PC-9 (cell line): ENCODE measurements at regions of chr1 and their contacts with region 1.

Region 1: DNA sequence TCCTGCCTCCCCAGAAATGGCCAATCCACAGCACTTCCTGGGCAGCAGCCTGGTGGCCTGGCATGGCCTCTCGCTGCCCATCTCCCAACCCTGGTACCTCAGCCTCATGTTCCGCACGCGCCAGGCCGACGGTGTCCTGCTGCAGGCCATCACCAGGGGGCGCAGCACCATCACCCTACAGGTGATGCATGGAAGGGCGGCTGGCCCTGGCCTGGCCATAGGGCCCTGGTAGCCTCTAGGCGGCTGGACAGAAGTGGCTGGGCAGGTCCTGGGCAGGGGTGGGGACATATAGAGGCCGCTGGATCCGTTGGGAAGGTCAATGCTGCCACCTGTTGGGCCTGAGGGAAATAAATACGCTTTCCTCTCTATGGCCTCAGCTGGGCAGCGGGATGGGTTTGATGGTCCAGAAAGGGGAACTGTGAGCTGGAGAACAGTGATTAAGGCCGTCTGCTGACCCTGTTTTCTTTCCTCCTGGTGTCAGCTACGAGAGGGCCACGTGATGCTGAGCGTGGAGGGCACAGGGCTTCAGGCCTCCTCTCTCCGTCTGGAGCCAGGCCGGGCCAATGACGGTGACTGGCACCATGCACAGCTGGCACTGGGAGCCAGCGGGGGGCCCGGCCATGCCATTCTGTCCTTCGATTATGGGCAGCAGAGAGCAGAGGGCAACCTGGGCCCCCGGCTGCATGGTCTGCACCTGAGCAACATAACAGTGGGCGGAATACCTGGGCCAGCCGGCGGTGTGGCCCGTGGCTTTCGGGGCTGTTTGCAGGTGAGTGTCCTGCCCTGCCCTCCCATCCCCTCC is 14.5 kb downstream of the CELSR2 start:
- DNase-seq: peak; percentile 96 to 97
- H3K4me3 ChIP-seq: no peak overlapping the region
- H3K27ac ChIP-seq: no peak overlapping the region
- H3K4me1 ChIP-seq: peaks cover 10% of the 10 kb centered on the region
- H3K27me3 ChIP-seq: no peaks in the 10 kb centered on the region
- CTCF ChIP-seq: peak; percentile 100

Region 2: DNA sequence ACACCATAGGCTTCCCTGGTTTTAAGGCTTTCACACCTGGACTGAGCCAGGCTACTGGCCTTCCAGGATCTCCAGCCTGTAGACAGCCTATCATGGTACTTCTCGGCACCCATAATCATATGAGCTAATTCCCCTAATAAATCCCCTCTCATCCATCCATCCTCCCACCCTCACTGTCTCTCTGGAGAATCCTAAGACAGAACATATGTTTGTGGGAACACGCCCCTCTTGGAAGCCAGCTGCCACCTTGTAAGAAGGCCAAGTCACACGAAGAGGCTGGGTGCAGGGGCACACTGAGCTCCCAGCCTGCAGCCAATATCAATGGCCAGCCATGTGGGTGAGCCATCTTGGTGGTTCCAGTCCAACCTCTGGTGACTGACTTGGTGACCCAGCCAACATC is 307.9 kb before region 1 on chr1:
- CTCF ChIA-PET with region 1: no interaction called
- POLR2A ChIA-PET with region 1: no interaction called
- intact Hi-C with region 1: loop called (anchors 10 kb)
- DNase-seq: no peak
- H3K4me3 ChIP-seq: no peak overlapping the region
- H3K27ac ChIP-seq: no peak overlapping the region
- H3K4me1 ChIP-seq: no peaks in the 10 kb centered on the region
- H3K27me3 ChIP-seq: no peaks in the 10 kb centered on the region
- CTCF ChIP-seq: no peak

Region 3: DNA sequence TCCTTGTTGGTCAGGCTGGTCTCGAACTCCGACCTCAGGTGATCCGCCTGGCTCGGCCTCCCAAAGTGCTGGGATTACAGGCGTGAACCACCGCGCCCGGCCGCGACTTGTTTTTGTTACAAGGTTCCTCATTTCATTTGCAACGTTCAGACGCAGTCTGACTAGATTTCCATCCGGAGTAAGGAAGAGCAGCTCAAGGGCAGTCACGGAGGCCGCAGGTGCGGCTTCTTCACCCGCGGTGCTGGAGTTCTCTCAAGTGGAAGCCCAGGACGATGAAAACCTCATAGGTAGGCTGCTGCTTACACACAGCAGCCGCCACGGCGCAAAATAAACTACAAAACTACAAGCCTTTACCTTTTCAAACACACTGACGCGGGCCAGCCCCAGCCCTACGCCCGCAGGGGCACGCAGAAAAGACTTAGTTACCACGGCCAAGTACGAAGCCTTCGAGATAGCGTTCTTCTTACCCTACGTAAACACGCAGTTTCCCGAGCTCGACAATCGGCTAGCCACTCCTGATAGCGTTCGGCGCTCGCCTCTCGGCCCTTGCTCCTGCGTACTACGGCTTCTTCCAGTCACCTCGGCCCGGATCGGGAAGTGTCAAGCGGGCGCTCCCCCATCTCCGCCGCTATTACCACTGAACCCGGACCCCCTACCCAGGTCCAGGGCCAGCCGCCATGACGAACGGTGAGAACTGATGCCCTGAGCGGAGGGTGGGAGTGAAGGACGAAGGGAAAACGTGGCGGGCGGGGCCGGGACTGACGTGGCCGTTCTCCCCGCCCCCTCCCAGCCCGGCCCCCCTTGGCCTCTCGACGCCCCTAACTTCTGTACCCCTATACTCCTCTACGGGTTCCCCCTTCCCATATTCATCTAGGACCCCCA is 173.4 kb before region 1 on chr1 and contains the start of gene TMEM167B:
- CTCF ChIA-PET with region 1: no interaction called
- POLR2A ChIA-PET with region 1: no interaction called
- intact Hi-C with region 1: loop called (anchors 1 kb)
- DNase-seq: peak; percentile 86 to 95
- H3K4me3 ChIP-seq: peak within 1 kb of the TSS; percentile 74
- H3K27ac ChIP-seq: peak within 1 kb of the TSS; percentile 78
- H3K4me1 ChIP-seq: peaks cover 25% of the 10 kb centered on the region
- H3K27me3 ChIP-seq: no peaks in the 10 kb centered on the region
- CTCF ChIP-seq: no peak
- total RNA-seq, gene TMEM167B: 19.2 and 23.6 TPM in 2 replicates

Region 4: DNA sequence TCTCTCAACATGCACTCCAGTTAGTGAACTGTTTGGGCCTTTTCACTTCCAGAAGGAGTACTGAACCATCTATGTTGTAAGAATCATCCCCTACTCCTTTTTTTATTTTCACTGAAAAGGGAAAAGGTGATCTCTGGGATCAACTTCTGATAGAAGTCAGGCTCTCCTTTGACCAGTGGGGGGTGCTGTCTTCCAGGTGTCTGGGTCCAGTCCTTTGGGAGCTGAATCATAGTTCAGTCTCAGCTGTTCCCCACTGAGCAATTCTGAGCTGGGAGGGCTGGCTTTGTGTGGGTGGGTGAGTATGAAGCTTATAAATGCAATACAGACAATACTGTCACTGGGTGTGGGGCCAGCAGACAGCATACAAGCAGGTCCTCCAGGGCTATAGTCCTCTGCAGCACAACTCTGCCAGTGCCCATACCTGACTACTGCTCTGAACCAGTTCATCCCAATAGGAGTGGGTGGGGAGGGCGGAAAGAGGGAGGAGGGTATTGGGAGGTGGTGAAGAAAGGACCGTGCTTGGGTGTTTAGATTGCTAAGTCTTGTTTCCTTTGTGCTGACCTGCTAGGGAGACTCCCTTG is 62.6 kb before region 1 on chr1:
- CTCF ChIA-PET with region 1: no interaction called
- POLR2A ChIA-PET with region 1: no interaction called
- intact Hi-C with region 1: loop called (anchors 1 kb)
- DNase-seq: peak; percentile 49 to 70
- H3K4me3 ChIP-seq: no peak overlapping the region
- H3K27ac ChIP-seq: no peak overlapping the region
- H3K4me1 ChIP-seq: peaks cover 23% of the 10 kb centered on the region
- H3K27me3 ChIP-seq: no peaks in the 10 kb centered on the region
- CTCF ChIP-seq: peak; percentile 92

Region 5: DNA sequence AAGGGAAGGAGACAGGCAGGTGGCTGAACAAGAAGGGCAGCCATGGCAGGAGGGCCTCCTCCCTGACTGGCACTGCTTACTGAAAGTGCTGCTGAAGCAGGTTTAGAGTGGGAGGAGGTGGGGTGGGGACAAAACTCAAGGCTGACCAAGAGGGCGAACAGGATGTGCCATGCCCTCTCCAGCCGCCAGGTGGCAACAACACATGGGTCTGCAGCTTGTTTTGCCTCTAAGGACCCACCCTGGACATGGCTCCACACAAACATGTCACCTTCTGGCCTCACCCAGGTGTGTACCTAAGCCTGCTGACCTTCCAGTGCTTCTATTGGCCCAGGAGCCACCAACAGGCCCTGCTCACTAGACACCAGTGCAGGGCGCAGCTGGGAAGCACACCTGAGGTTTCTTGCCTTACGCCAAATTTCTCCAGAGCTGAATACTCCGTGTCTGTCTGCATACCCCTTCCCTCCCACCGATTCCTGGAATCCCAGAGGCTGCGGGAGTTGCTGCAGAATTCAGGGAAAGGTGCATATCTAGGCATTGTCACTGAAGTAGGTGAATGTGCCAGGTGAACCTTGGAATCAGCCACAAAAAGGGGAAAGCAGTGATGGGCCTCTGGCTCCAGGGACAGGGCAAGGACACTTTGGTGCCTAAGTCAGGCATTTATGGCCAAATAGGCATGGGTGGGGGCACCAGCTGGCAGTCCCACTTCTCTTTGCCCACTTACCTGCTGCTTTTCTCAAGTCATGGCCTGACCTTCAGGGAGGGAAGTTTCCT is 13.8 kb after region 1 on chr1:
- CTCF ChIA-PET with region 1: interaction called, 3 read pairs
- POLR2A ChIA-PET with region 1: no interaction called
- intact Hi-C with region 1: loop called (anchors 1 kb)
- DNase-seq: peak; percentile 67 to 76
- H3K4me3 ChIP-seq: no peak overlapping the region
- H3K27ac ChIP-seq: peak overlapping the region; percentile 78
- H3K4me1 ChIP-seq: peaks cover 70% of the 10 kb centered on the region
- H3K27me3 ChIP-seq: no peaks in the 10 kb centered on the region
- CTCF ChIP-seq: peak; percentile 96

Region 6: DNA sequence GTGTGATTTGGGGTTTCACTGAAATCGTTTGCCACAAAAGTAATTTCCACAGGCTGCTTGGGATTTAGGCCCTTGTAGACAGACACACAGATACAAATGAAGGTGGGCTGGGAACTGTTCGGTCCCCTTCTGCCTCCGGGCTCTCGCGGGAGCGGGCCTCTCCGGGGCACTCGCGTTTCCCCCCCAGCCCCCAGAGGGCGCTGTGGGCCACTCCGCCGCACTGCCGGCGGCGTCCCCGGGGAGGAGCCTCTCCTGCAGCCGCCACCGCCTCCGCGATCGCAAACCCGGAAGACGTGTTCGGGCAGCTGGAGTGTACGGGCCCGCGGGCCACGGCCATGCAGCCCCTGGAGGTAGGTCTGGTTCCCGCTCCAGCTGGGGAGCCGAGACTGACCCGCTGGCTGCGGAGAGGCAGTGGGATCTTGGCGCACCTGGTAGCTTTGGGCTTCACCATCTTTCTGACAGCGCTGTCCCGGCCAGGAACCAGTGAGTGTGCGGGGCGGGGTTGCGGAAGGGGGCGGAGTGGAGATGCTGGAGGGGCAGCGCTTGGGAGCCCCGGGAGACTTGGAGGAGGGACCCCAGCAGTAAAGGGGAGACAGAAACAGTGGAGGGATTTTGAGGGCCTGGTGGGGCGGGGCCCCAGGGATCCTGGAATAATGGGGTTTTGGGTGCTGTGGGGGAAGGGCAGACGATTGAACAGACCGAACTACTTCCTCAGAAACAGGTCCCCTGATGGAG is 230.2 kb after region 1 on chr1 and contains the start of gene CYB561D1:
- CTCF ChIA-PET with region 1: no interaction called
- POLR2A ChIA-PET with region 1: interaction called, 15 read pairs
- intact Hi-C with region 1: loop called (anchors 2 kb)
- DNase-seq: peak; percentile 78 to 89
- H3K4me3 ChIP-seq: peak within 1 kb of the TSS; percentile 96
- H3K27ac ChIP-seq: no peak within 1 kb of the TSS
- H3K4me1 ChIP-seq: peaks cover 17% of the 10 kb centered on the region
- H3K27me3 ChIP-seq: no peaks in the 10 kb centered on the region
- CTCF ChIP-seq: peak; percentile 97
- total RNA-seq, gene CYB561D1: 11.6 and 11.7 TPM in 2 replicates